ENCODE measurements at regions of chr3 and their contacts with region 1.

Region 1: DNA sequence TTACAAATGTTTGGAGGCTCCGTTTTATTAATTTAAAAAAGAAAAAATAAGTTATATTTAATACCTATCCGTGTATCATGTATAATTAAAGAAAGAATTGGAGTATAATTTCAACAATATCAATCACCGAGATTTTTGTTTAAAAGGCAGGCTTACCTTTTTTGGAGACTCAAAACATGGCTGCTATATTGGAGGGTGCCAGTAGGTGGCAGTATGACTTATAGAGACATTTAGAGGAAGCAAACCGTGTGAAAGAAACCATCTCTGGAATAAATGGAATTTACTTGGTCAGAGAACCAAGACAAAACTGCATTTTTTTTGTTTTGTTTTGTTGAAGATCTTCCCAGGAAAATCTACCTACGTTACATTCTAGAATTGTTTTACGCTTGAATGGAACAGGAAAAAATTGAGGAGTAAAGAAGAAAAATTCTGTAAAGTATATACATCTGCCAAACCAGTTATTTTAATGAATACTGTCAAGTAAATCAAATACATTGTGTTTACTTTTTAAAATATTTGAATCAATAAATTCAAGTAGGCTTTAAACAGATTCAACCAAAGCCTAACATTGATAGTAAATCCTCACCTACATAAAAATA is 802.6 kb upstream of the ALCAM start:
- DNase-seq: no peak
- H3K4me3 Mint-ChIP-seq: no peak overlapping the region
- H3K27ac Mint-ChIP-seq: no peak overlapping the region
- H3K4me1 Mint-ChIP-seq: no peaks in the 10 kb centered on the region
- H3K27me3 Mint-ChIP-seq: no peaks in the 10 kb centered on the region

Region 2: GRCh38 chr3:104810896-104811295 is 246.8 kb after region 1 on chr3:
- intact Hi-C with region 1: no loop called
- DNase-seq: no peak
- H3K4me3 Mint-ChIP-seq: no peak overlapping the region
- H3K27ac Mint-ChIP-seq: no peak overlapping the region
- H3K4me1 Mint-ChIP-seq: no peaks in the 10 kb centered on the region
- H3K27me3 Mint-ChIP-seq: no peaks in the 10 kb centered on the region

Region 3: GRCh38 chr3:105518806-105519418 is 954.8 kb after region 1 on chr3:
- intact Hi-C with region 1: loop called (anchors 10 kb)
- DNase-seq: no peak
- H3K4me3 Mint-ChIP-seq: no peak overlapping the region
- H3K27ac Mint-ChIP-seq: no peak overlapping the region
- H3K4me1 Mint-ChIP-seq: peaks cover 12% of the 10 kb centered on the region
- H3K27me3 Mint-ChIP-seq: no peaks in the 10 kb centered on the region